Activated CD4-positive, alpha-beta T cell treated with anti-CD3 and anti-CD28 coated beads for 36 hours (primary cell): ENCODE measurements at regions of chr11 and their contacts with region 1.

Region 1: DNA sequence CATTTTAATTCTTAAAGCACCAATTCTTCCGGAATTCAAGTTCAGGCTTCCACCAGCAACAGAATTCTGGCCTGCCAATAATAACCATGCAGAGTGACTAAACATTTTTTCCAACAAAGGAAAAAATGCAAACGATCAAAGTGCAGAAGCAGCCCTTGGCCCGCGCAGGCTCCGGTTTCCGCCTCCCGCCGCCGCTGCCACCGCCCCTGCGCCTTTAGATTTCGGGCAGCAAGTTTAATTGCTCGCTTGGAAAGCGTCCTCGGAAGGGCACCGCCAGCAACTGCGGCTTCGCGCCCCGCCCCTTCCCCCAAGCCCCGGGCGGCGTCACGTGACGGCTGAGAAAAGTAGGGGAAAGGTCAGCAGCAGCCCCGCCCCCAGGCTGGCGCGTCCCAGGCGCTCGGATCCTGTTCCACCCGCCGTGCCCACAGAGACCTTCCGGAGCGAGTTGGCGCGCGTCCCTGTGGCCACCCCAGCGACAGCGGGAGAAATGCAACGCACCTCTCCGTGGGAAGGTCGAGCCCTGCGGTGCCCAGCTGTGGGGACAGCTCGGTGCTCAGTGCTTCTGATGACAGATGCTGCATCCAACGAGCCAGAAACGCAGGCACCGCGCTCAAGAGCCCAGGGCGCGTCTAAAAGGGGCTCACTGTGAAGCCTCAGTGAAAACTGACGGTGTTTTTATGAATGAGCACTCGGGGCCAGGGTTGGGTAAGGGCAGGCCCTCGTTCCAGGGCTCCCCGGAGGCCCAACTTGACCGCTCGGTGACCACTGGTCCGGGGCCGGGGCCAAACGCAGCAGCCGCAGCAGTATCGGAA is 2.5 kb downstream of the CPT1A start:
- DNase-seq: peak; percentile 97
- ATAC-seq: peak; percentile 57
- H3K4me3 Mint-ChIP-seq: peak overlapping the region; percentile 81
- H3K27ac Mint-ChIP-seq: peak overlapping the region; percentile 86
- H3K4me1 Mint-ChIP-seq: peaks cover 50% of the 10 kb centered on the region
- H3K27me3 Mint-ChIP-seq: no peaks in the 10 kb centered on the region

Region 2: DNA sequence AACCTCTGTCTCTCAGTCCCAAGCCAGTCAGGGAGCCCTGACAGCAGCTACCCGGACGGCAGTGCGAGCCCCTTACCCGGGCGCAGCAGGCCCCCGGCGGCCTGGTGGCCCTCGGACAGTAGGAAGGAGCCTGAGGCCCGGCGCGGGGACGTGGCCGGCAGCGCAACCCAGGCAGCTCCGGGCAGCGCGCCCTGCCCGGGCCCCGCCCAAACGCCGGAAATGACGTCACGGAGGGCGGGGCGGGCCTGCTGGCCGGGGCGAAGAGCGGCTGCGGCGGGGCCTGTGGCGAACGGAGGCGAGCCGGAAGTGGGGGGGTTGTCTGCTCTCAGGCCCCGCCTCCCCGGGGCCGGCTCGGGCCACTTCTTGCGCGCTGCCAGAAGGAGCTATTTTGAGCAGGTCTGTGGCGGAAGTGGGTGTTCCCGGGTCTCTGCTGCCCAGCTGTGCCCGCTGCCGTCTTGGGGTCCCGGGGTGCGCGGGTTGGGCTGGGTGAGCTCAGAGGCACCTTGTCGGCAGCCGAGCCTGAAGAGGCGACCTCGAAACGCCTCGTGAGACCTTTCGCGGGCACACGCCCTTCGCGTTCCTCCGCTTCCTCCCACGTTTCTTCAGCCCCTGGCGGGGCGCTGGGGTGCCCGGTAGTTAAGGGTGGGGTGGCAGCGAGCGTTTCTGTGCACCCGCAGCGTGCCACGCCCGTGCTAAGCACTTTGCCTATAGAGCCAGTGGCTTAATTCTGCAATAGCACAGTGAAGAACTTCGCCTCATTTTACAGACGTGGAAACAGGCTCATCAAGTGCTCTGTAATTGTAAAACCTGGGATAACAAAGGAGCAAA is 567.3 kb before region 1 on chr11 and contains the start of gene C11orf24:
- CTCF ChIA-PET with region 1: no interaction called
- POLR2A ChIA-PET with region 1: no interaction called
- intact Hi-C with region 1: loop called in 1 of 2 experiments (anchors 1 kb)
- DNase-seq: peak; percentile 97
- ATAC-seq: peak; percentile 97
- H3K4me3 Mint-ChIP-seq: peak within 1 kb of the TSS; percentile 91
- H3K27ac Mint-ChIP-seq: peak within 1 kb of the TSS; percentile 95
- H3K4me1 Mint-ChIP-seq: peaks cover 30% of the 10 kb centered on the region
- H3K27me3 Mint-ChIP-seq: no peaks in the 10 kb centered on the region
- total RNA-seq, gene C11orf24: 29.4 to 37.4 TPM

Region 3: DNA sequence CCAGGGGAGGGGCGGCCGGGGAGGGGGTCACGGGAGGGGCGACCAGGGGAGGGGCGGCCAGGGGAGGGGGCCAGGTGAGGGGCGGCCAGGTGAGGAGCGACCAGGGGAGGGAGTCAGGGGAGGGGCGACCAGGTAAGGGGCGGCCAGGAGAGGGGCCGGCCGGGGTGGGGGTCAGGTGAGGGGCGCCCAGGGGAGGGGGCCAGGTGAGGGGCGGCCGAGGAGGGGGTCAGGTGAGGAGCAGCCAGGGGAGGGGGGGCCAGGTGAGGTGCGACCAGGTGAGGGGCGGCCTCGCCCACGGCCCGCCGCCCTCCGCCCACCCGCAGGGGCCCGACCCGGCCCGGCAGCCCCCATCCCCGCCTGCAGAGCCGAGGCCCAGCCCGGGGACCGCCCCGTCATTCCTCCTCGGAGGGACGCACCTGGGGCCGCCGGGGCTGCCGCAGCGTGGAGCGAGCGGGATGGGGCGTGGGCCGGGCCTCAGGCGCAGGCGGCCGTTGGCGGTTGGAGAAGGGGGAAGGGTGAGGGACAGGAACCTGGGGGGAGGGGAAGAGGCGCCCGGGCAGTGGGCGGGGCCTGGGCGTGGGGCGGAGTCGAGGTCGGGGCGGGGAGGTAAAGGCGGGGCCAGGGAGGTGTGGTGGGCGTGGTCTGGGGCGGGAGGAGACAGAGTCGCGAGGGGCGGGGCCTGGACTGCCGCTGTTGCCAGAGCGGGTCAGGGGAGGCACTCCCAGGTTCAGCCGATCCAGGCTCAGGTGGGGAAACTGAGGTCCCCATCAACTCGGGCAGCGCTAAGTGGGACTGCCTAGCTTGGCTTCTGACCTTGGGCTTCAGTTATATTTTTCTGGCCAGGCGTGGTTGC is 88.0 kb before region 1 on chr11 and contains the start of gene TESMIN:
- CTCF ChIA-PET with region 1: interaction called, 3 read pairs
- POLR2A ChIA-PET with region 1: no interaction called
- intact Hi-C with region 1: loop called (anchors 1 to 2 kb)
- DNase-seq: peak; percentile 97
- ATAC-seq: peak; percentile 96
- H3K4me3 Mint-ChIP-seq: peak within 1 kb of the TSS; percentile 65
- H3K27ac Mint-ChIP-seq: peak within 1 kb of the TSS; percentile 65
- H3K4me1 Mint-ChIP-seq: peaks cover 2% of the 10 kb centered on the region
- H3K27me3 Mint-ChIP-seq: no peaks in the 10 kb centered on the region
- total RNA-seq, gene TESMIN: 2.9 to 3.5 TPM

Region 4: DNA sequence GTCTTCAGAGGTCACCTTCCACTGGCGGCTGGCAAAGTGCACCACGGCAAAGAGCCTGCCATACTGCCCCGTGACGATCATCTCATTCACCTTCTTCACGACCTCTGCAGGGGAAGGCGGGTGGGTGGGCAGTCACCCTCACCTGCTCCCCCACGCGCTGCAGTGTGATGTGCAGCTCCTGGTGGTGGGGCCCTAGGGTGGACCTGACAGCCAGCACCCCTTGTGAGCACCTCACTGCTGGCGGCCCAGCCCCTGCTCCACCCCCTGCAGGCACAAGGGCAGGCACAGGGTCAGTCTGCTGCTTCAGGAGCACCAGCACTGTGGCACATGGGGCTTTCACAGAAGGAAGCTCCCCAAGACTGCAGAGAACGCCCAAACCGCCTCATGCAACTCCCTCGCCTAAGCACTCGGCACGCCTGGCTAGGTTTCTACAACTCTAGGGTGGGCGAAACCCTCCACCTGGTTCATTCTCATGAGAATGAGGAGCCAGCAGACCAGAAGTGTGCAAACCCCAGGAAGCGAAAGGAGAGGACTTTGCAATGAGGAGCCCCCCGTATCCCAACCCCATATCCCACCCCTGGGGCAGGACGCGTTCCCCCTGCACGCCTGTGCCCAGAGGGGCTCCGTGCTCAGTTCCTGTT is 57.4 kb after region 1 on chr11:
- CTCF ChIA-PET with region 1: no interaction called
- POLR2A ChIA-PET with region 1: no interaction called
- intact Hi-C with region 1: no loop called
- DNase-seq: no peak
- ATAC-seq: no peak
- H3K4me3 Mint-ChIP-seq: no peak overlapping the region
- H3K27ac Mint-ChIP-seq: no peak overlapping the region
- H3K4me1 Mint-ChIP-seq: peaks cover 5% of the 10 kb centered on the region
- H3K27me3 Mint-ChIP-seq: no peaks in the 10 kb centered on the region

Region 5: DNA sequence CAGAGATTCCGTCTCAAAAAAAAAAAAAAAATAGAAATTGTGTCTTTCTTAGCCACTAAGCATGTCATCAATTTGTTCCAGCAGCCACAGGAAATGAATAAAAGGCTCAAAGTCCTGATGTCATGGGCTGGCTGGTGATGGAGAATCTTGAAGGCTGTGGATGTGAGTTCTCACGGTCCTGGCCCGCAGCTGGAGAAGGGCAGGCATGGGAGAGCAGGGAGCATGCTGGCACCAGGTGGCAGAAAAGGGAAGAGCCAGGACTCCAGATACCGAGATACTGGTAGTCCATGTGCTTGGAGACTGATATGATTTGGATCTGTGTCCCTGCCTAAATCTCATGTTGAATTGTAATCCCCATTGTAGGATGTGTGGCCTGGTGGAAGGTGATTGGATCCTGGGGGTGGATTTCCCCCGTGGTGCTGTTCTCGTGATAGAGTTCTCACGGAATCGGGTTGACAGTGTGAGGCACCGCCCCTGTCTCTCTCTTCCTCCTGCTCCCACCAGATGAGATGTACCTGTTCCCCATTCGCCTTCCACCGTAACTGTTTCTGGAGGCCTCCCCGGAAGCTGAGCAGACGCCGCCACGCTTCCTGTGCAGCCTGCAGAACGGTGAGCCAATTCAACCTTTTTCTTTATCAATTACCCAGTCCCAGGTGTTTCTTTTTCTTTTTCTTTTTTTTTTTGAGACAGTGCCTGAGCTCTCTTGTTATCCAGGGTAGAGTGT is 123.4 kb after region 1 on chr11:
- CTCF ChIA-PET with region 1: no interaction called
- POLR2A ChIA-PET with region 1: no interaction called
- intact Hi-C with region 1: no loop called
- DNase-seq: peak; percentile 36
- ATAC-seq: peak; percentile 74
- H3K4me3 Mint-ChIP-seq: peak overlapping the region; percentile 11
- H3K27ac Mint-ChIP-seq: peak overlapping the region; percentile 53
- H3K4me1 Mint-ChIP-seq: peaks cover 21% of the 10 kb centered on the region
- H3K27me3 Mint-ChIP-seq: no peaks in the 10 kb centered on the region

Region 6: GRCh38 chr11:69296890-69297786 is 457.9 kb after region 1 on chr11:
- CTCF ChIA-PET with region 1: no interaction called
- POLR2A ChIA-PET with region 1: no interaction called
- intact Hi-C with region 1: loop called in 1 of 2 experiments (anchors 5 kb)
- DNase-seq: peak; percentile 91
- ATAC-seq: peak; percentile 67
- H3K4me3 Mint-ChIP-seq: peak overlapping the region; percentile 32
- H3K27ac Mint-ChIP-seq: peak overlapping the region; percentile 37
- H3K4me1 Mint-ChIP-seq: peaks cover 50% of the 10 kb centered on the region
- H3K27me3 Mint-ChIP-seq: peaks cover 2% of the 10 kb centered on the region

Region 7: GRCh38 chr11:69675811-69676371 is 836.6 kb after region 1 on chr11:
- CTCF ChIA-PET with region 1: no interaction called
- POLR2A ChIA-PET with region 1: no interaction called
- intact Hi-C with region 1: loop called in 1 of 2 experiments (anchors 1 kb)
- DNase-seq: no peak
- ATAC-seq: no peak
- H3K4me3 Mint-ChIP-seq: peak overlapping the region; percentile 89
- H3K27ac Mint-ChIP-seq: no peak overlapping the region
- H3K4me1 Mint-ChIP-seq: peaks cover 20% of the 10 kb centered on the region
- H3K27me3 Mint-ChIP-seq: peaks cover 2% of the 10 kb centered on the region